ENCODE measurements at regions of chr7 and their contacts with region 1.

Region 1: DNA sequence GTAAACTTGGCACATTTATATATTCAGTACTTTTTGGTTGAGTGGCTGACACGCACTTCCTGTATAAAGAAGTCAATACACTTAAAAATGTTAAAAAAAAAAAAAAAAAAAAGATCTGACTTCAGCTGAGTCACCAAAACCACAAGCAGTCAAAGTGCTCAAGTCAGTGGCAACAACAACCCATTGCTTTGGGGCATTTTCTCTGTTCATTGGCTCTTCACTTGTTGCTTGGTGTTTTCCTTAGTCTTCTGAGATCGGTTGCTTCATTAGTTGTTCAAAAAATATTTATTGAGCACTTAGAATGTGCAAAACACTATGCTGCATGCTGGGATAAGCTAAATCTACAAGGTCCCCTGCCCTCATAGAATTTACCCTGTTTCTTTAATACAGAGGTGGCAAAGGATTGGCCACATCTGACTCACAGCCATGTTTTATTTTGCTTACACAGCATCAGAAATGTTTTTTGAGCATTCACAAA is 63.7 kb downstream of the ZNRF2 start:
- DNase-seq: peak; percentile 64
- ATAC-seq: peak; percentile 84
- H3K4me3 ChIP-seq: no peak overlapping the region
- H3K4me3 Mint-ChIP-seq: peak overlapping the region; percentile 40
- H3K27ac ChIP-seq: peak overlapping the region in 1 of 2 donors; percentile 59
- H3K27ac Mint-ChIP-seq: peak overlapping the region; percentile 69
- H3K4me1 ChIP-seq: peaks cover 21 to 53% of the 10 kb centered on the region in 2 donors
- H3K4me1 Mint-ChIP-seq: peaks cover 61% of the 10 kb centered on the region
- H3K27me3 ChIP-seq: no peaks in the 10 kb centered on the region
- H3K27me3 Mint-ChIP-seq: no peaks in the 10 kb centered on the region
- CTCF ChIP-seq: no peak

Region 2: GRCh38 chr7:30026229-30027064 is 321.7 kb before region 1 on chr7 and contains the start of gene FKBP14:
- CTCF ChIA-PET with region 1: no interaction called
- POLR2A ChIA-PET with region 1: no interaction called
- intact Hi-C with region 1: loop called (anchors 5 kb)
- DNase-seq: peak; percentile 94
- ATAC-seq: peak; percentile 76
- H3K4me3 ChIP-seq: peak within 1 kb of the TSS; percentile 84 to 97 (median 90)
- H3K4me3 Mint-ChIP-seq: peak within 1 kb of the TSS; percentile 90
- H3K27ac ChIP-seq: peak within 1 kb of the TSS; percentile 77 to 84
- H3K27ac Mint-ChIP-seq: peak within 1 kb of the TSS; percentile 95
- H3K4me1 ChIP-seq: peaks cover 20 to 27% of the 10 kb centered on the region in 2 donors
- H3K4me1 Mint-ChIP-seq: peaks cover 30% of the 10 kb centered on the region
- H3K27me3 ChIP-seq: no peaks in the 10 kb centered on the region
- H3K27me3 Mint-ChIP-seq: no peaks in the 10 kb centered on the region
- CTCF ChIP-seq: no peak
- total RNA-seq, gene FKBP14: 4.2 and 5.7 TPM in 2 replicates

Region 3: DNA sequence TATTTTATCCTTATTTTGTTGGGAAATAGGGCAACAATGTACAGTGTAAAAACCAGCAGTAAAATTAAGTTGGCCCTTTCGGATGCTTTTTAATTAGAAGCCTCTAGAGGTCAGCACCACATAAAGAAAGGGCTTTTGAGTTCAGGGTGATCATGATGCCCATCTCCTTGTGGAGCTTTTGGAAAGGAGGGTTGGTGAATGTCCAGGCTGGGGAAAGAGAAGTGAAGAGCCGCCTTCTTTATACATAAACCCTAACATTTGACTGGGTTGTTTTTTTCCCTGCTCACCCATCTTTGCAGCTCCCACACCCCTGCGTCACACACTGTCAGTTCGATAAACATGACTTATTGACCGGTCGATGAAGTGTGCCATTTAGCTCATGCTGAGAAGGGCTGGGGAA is 183.6 kb before region 1 on chr7:
- CTCF ChIA-PET with region 1: interaction called, 16 read pairs
- POLR2A ChIA-PET with region 1: interaction called, 4 read pairs
- intact Hi-C with region 1: loop called (anchors 2 kb)
- DNase-seq: peak; percentile 61
- ATAC-seq: peak; percentile 39
- H3K4me3 ChIP-seq: no peak overlapping the region
- H3K4me3 Mint-ChIP-seq: peak overlapping the region; percentile 38
- H3K27ac ChIP-seq: no peak overlapping the region
- H3K27ac Mint-ChIP-seq: no peak overlapping the region
- H3K4me1 ChIP-seq: peaks cover 31 to 37% of the 10 kb centered on the region in 2 donors
- H3K4me1 Mint-ChIP-seq: peaks cover 41% of the 10 kb centered on the region
- H3K27me3 ChIP-seq: no peaks in the 10 kb centered on the region
- H3K27me3 Mint-ChIP-seq: no peaks in the 10 kb centered on the region
- CTCF ChIP-seq: peak; percentile 76

Region 4: DNA sequence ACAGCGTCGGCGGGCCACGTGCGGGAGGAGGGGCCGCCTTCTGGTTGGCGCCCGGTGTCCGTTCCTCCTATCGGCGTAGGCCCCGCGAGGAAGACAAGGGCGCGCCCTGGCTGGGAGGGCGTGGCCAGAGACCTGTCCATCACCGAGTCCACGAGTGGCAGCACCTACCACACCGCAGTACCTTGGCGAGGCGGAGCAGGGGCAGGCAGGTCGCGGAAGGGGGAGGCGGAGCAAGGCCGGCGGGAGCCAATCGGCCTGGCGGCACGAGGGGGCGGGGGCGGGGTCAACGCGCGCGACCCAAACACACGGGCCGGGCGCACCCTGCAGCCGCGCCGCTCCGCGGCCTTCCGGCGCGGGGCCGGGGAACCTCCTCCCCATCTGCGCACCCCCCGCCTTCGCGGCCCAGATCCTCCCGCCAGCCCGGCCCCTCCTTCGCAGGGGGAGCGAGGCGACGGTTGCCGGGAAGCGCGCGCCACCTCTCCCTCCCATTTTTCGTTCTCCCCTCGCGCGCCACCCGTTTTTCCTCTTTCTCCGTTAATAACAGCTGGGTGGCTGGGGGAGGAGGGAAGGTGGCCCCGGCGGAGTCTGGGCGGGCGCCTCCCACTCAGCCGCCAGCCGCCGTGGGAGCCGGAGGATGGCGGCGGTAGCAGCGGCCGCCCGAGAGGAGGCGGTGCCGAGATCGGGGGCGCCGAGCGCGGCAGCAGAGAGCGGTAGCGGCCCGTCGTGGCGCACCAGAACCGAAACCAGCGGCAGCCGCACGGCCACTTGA is 63.6 kb before region 1 on chr7 and contains the start of gene ZNRF2:
- CTCF ChIA-PET with region 1: interaction called, 89 read pairs
- POLR2A ChIA-PET with region 1: interaction called, 4 read pairs
- intact Hi-C with region 1: loop called (anchors 1 kb)
- DNase-seq: peak; percentile 99
- ATAC-seq: peak; percentile 80
- H3K4me3 ChIP-seq: peak within 1 kb of the TSS; percentile 46 to 91 (median 80)
- H3K4me3 Mint-ChIP-seq: peak within 1 kb of the TSS; percentile 88
- H3K27ac ChIP-seq: peak within 1 kb of the TSS; percentile 84 to 90
- H3K27ac Mint-ChIP-seq: peak within 1 kb of the TSS; percentile 96
- H3K4me1 ChIP-seq: peaks cover 19 to 30% of the 10 kb centered on the region in 2 donors
- H3K4me1 Mint-ChIP-seq: peaks cover 44% of the 10 kb centered on the region
- H3K27me3 ChIP-seq: no peaks in the 10 kb centered on the region
- H3K27me3 Mint-ChIP-seq: no peaks in the 10 kb centered on the region
- CTCF ChIP-seq: peak; percentile 41
- total RNA-seq, gene ZNRF2: 32.0 and 33.6 TPM in 2 replicates

Region 5: GRCh38 chr7:30315589-30315988 is 32.5 kb before region 1 on chr7:
- CTCF ChIA-PET with region 1: interaction called, 27 read pairs
- POLR2A ChIA-PET with region 1: interaction called, 10 read pairs
- intact Hi-C with region 1: no loop called
- DNase-seq: no peak
- ATAC-seq: no peak
- H3K4me3 ChIP-seq: no peak overlapping the region
- H3K4me3 Mint-ChIP-seq: no peak overlapping the region
- H3K27ac ChIP-seq: no peak overlapping the region
- H3K27ac Mint-ChIP-seq: peak overlapping the region; percentile 17
- H3K4me1 ChIP-seq: peaks cover 11 to 26% of the 10 kb centered on the region in 2 donors
- H3K4me1 Mint-ChIP-seq: peaks cover 71% of the 10 kb centered on the region
- H3K27me3 ChIP-seq: no peaks in the 10 kb centered on the region
- H3K27me3 Mint-ChIP-seq: no peaks in the 10 kb centered on the region
- CTCF ChIP-seq: no peak

Region 6: GRCh38 chr7:30363778-30364563 is 15.8 kb after region 1 on chr7:
- CTCF ChIA-PET with region 1: interaction called, 3 read pairs
- POLR2A ChIA-PET with region 1: no interaction called
- intact Hi-C with region 1: loop called (anchors 2 kb)
- DNase-seq: no peak
- ATAC-seq: no peak
- H3K4me3 ChIP-seq: no peak overlapping the region
- H3K4me3 Mint-ChIP-seq: peak overlapping the region; percentile 7
- H3K27ac ChIP-seq: no peak overlapping the region
- H3K27ac Mint-ChIP-seq: peak overlapping the region; percentile 28
- H3K4me1 ChIP-seq: peaks cover 4 to 9% of the 10 kb centered on the region in 2 donors
- H3K4me1 Mint-ChIP-seq: peaks cover 28% of the 10 kb centered on the region
- H3K27me3 ChIP-seq: no peaks in the 10 kb centered on the region
- H3K27me3 Mint-ChIP-seq: no peaks in the 10 kb centered on the region
- CTCF ChIP-seq: no peak

Region 7: GRCh38 chr7:30433082-30433481 is 85.0 kb after region 1 on chr7:
- CTCF ChIA-PET with region 1: interaction called, 5 read pairs
- POLR2A ChIA-PET with region 1: no interaction called
- intact Hi-C with region 1: loop called (anchors 10 kb)
- DNase-seq: peak; percentile 24
- ATAC-seq: no peak
- H3K4me3 ChIP-seq: peak overlapping the region in 1 of 5 experiments; percentile 24
- H3K4me3 Mint-ChIP-seq: peak overlapping the region; percentile 53
- H3K27ac ChIP-seq: peak overlapping the region; percentile 61 to 72
- H3K27ac Mint-ChIP-seq: peak overlapping the region; percentile 86
- H3K4me1 ChIP-seq: peaks cover 74 to 88% of the 10 kb centered on the region in 2 donors
- H3K4me1 Mint-ChIP-seq: peaks cover 76% of the 10 kb centered on the region
- H3K27me3 ChIP-seq: no peaks in the 10 kb centered on the region
- H3K27me3 Mint-ChIP-seq: no peaks in the 10 kb centered on the region
- CTCF ChIP-seq: no peak

Measured in B cell (primary cell).